Spleen (tissue), 13 donors: ENCODE measurements at regions of chr17 and their contacts with region 1.

Region 1: DNA sequence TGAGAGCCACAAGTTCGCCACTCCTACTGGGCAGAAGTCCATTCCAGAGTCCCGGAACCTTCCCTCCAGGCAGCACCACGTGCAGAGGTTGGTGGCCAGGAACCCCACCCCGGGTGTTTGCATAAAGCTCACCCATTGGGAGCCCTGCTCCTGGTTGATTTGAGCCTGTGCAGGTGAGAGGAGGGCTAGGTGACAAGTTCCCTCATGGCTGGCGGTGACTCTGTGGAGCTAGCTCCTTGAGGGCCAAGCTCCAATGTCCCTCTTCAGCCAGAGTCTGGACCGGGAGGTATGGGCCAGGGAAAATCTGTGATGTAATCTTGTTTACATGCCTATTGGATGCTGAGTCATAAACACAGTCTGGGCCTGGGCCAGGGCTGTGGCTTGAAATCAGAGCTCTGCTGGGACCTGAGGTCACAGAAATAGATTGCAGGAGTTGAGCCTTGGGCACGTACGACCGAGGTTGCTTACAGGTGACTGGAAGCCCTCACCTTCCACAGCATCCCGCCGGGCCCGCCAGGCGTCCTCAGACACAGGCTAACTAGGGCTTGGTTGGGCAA is 118.9 kb downstream of the AATF start:
- DNase-seq: no peak
- H3K4me3 ChIP-seq: no peak overlapping the region
- H3K27ac ChIP-seq: no peak overlapping the region
- H3K4me1 ChIP-seq: no peaks in the 10 kb centered on the region
- H3K27me3 ChIP-seq: peaks cover 0 to 23% (median 0%) of the 10 kb centered on the region in 7 donors
- CTCF ChIP-seq: no peak
- POLR2A ChIP-seq: no peak

Region 2: GRCh38 chr17:37179893-37180292 is 112.3 kb after region 1 on chr17:
- intact Hi-C with region 1: loop called (anchors 5 kb)
- DNase-seq: no peak
- H3K4me3 ChIP-seq: no peak overlapping the region
- H3K27ac ChIP-seq: no peak overlapping the region
- H3K4me1 ChIP-seq: no peaks in the 10 kb centered on the region
- H3K27me3 ChIP-seq: no peaks in the 10 kb centered on the region
- CTCF ChIP-seq: no peak
- POLR2A ChIP-seq: no peak

Region 3: DNA sequence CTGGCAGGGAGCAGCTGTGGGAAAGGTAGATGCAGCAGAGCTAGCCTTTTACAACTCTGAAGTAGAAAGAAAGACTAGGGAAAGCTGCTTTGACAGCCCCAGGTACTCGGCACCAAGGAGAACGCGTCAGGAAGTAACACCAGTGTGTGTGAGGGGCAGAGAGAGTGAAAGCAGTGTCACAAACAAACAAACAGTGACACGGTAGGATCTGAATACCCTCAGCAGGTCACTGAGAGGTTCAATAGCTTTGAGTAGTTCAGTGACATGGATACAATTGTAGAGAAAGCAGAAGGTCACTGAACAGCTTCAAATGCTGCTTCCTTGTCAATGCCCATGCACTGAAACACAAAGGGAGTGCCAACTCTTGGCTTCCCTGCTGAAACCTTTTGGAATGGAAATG is 157.8 kb after region 1 on chr17:
- intact Hi-C with region 1: no loop called
- DNase-seq: no peak
- H3K4me3 ChIP-seq: no peak overlapping the region
- H3K27ac ChIP-seq: no peak overlapping the region
- H3K4me1 ChIP-seq: no peaks in the 10 kb centered on the region
- H3K27me3 ChIP-seq: no peaks in the 10 kb centered on the region
- CTCF ChIP-seq: no peak
- POLR2A ChIP-seq: no peak